ENCODE measurements at regions of chr9 and their contacts with region 1.

Region 1: GRCh38 chr9:70602321-70603019 is 188.0 kb upstream of the KLF9 start:
- DNase-seq: no peak
- ATAC-seq: peak; percentile 80 to 85
- H3K4me3 ChIP-seq: peak overlapping the region; percentile 10
- H3K27ac ChIP-seq: peak overlapping the region; percentile 82
- H3K4me1 ChIP-seq: peaks cover 28% of the 10 kb centered on the region
- H3K27me3 ChIP-seq: no peaks in the 10 kb centered on the region
- CTCF ChIP-seq: peak; percentile 74

Region 2: GRCh38 chr9:70340572-70340971 is 261.9 kb before region 1 on chr9:
- intact Hi-C with region 1: loop called (anchors 10 kb)
- DNase-seq: no peak
- ATAC-seq: no peak
- H3K4me3 ChIP-seq: no peak overlapping the region
- H3K27ac ChIP-seq: no peak overlapping the region
- H3K4me1 ChIP-seq: no peaks in the 10 kb centered on the region
- H3K27me3 ChIP-seq: no peaks in the 10 kb centered on the region
- CTCF ChIP-seq: peak; percentile 51

Region 3: DNA sequence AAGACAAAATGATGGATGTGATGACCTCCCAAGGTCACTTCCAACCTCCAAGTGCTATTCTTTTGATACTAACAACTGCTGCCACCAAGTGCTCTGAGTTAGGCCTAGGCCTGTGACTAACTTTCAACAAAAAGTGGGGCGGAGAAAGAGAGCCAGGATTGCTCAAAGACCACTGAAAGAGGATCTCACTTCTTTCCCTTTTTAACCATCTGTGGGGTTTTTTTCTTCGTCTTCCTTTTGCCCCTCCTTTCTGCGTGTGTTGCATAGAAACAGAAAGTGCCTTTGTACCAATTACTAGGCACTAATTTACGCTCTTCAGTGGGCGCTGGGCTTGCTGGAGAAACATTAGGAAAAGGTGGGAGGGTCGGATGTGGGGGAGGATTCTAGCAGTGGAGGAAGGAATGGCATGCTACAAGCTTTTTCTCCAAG is 196.0 kb before region 1 on chr9:
- intact Hi-C with region 1: loop called (anchors 10 kb)
- DNase-seq: no peak
- ATAC-seq: peak; percentile 26 to 56
- H3K4me3 ChIP-seq: peak overlapping the region; percentile 75
- H3K27ac ChIP-seq: peak overlapping the region; percentile 64
- H3K4me1 ChIP-seq: peaks cover 94% of the 10 kb centered on the region
- H3K27me3 ChIP-seq: no peaks in the 10 kb centered on the region
- CTCF ChIP-seq: no peak

Region 4: GRCh38 chr9:70484210-70485130 is 118.0 kb before region 1 on chr9:
- intact Hi-C with region 1: loop called (anchors 10 kb)
- DNase-seq: no peak
- ATAC-seq: peak; percentile 75 to 80
- H3K4me3 ChIP-seq: no peak overlapping the region
- H3K27ac ChIP-seq: peak overlapping the region; percentile 51
- H3K4me1 ChIP-seq: peaks cover 73% of the 10 kb centered on the region
- H3K27me3 ChIP-seq: no peaks in the 10 kb centered on the region
- CTCF ChIP-seq: peak; percentile 83

Measured in lower lobe of right lung (tissue), 2 donors.